Caco-2 (cell line): ENCODE measurements at regions of chr18 and their contacts with region 1.

Region 1: GRCh38 chr18:79380816-79381806 is 14.6 kb upstream of the NFATC1 start:
- DNase-seq: peak; percentile 42 to 63
- H3K4me3 ChIP-seq: no peak overlapping the region
- H3K4me3 Mint-ChIP-seq: no peak overlapping the region
- H3K27ac Mint-ChIP-seq: no peak overlapping the region
- H3K4me1 ChIP-seq: no peaks in the 10 kb centered on the region
- H3K4me1 Mint-ChIP-seq: peaks cover 5% of the 10 kb centered on the region
- H3K27me3 ChIP-seq: no peaks in the 10 kb centered on the region
- H3K27me3 Mint-ChIP-seq: peaks cover 4% of the 10 kb centered on the region
- CTCF ChIP-seq: peak; percentile 59

Region 2: DNA sequence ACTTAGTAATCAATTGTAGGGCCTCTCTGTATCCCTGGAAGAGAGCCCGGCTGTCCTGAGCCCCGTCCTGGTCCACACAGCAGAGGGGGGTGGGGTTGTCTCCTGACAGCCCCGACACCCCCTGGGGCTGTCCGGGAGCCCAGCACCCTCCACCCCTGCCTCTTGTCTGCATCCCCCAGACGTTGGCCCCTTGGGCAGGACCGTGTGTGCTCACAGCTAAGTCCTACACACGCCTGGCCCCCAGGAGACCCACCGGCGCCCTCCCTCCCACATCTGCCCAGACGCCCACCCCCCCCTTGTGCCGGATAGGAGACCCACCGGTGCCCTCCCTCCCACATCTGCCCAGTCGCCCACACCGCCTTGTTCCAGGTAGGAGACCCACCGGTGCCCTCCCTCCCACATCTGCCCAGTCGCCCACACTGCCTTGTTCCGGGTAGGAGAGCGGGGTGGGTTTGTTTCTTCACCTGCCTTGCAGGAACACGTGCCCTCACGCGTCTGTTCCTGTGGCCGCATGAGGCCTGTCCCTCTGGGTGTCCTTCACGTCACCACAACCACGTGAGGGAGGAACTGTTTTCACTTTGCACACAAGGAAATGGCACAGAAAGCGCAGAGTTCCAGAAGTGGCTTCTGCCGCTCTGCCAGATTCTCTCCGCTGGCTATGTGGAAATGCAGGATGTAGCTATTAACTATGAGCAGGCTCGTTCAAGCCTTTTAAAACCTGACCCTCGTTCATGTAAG is 46.4 kb before region 1 on chr18:
- CTCF ChIA-PET with region 1: no interaction called
- POLR2A ChIA-PET with region 1: no interaction called
- intact Hi-C with region 1: no loop called
- DNase-seq: no peak
- H3K4me3 ChIP-seq: no peak overlapping the region
- H3K4me3 Mint-ChIP-seq: no peak overlapping the region
- H3K27ac Mint-ChIP-seq: no peak overlapping the region
- H3K4me1 ChIP-seq: no peaks in the 10 kb centered on the region
- H3K4me1 Mint-ChIP-seq: no peaks in the 10 kb centered on the region
- H3K27me3 ChIP-seq: no peaks in the 10 kb centered on the region
- H3K27me3 Mint-ChIP-seq: no peaks in the 10 kb centered on the region
- CTCF ChIP-seq: no peak

Region 3: DNA sequence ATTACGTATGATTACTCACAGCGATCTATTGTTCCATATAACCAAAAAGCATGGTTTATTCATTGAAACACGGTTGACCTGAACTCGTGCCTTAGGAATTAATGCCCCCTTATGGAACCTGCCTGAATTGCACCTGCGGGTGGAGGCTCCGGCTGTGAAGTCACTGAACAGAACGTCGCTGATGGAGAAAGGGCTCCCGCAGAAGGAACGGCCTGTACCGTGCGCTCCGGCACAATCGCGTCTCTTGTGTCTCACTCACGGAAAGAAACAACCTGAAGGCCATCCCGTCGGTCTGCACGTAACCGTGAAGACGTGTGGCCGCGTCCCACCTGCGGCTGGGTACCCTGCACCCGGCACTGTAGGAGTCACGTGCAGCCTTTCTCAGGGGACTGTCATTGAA is 147.7 kb after region 1 on chr18:
- CTCF ChIA-PET with region 1: no interaction called
- POLR2A ChIA-PET with region 1: no interaction called
- intact Hi-C with region 1: loop called (anchors 1 kb)
- DNase-seq: peak; percentile 59 to 68
- H3K4me3 ChIP-seq: no peak overlapping the region
- H3K4me3 Mint-ChIP-seq: no peak overlapping the region
- H3K27ac Mint-ChIP-seq: no peak overlapping the region
- H3K4me1 ChIP-seq: no peaks in the 10 kb centered on the region
- H3K4me1 Mint-ChIP-seq: no peaks in the 10 kb centered on the region
- H3K27me3 ChIP-seq: no peaks in the 10 kb centered on the region
- H3K27me3 Mint-ChIP-seq: peaks cover 6% of the 10 kb centered on the region
- CTCF ChIP-seq: peak; percentile 50 to 67

Region 4: DNA sequence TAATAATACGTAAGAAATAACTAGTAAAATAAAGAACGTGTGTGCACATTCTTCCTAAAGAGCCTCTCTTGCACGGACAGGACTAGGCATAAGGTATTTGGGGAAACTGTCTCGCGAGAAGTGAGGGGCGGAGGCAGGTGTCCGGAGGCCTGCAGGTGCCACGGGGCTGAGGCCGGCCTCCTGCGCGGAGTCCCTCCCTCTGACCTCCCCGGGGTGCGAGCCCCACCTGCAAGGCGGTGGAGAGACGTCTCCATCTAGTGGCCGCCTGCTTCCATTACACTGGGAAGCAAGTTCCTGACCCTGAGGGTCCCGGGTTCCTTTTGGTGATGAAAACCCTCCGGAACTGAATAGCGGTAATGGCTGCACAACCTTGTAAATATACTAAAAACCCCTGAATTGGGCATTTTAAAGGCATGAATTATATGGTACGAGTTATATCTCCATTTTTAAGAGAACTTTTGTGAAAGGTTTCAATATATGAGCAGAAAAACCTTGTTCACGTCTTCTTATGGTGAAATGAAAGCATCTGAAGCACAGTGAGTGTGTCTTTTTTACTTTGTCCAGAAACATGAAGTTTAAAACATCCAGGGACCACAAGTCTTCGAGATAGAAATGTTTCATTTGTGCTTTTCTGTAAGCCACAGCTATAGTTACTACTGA is 263.0 kb after region 1 on chr18:
- CTCF ChIA-PET with region 1: no interaction called
- POLR2A ChIA-PET with region 1: no interaction called
- intact Hi-C with region 1: loop called (anchors 1 kb)
- DNase-seq: peak; percentile 66 to 68
- H3K4me3 ChIP-seq: no peak overlapping the region
- H3K4me3 Mint-ChIP-seq: no peak overlapping the region
- H3K27ac Mint-ChIP-seq: no peak overlapping the region
- H3K4me1 ChIP-seq: no peaks in the 10 kb centered on the region
- H3K4me1 Mint-ChIP-seq: no peaks in the 10 kb centered on the region
- H3K27me3 ChIP-seq: no peaks in the 10 kb centered on the region
- H3K27me3 Mint-ChIP-seq: no peaks in the 10 kb centered on the region
- CTCF ChIP-seq: peak; percentile 73 to 82